Activated T-helper 2 cell treated with anti-CD3 and anti-CD28 coated beads, Interferon-gamma antibody, Interleukin-2, Interleukin-4, amounts not matched to agents 10 μg/mL and 5 μg/mL and 100 μg/mL, durations not matched to agents 14 hours and 24 hours and 36 hours (primary cell): ENCODE measurements at regions of chr6 and their contacts with region 1.

Region 1: GRCh38 chr6:90044833-90045381 is 150.6 kb downstream of the GJA10 start:
- DNase-seq: no peak
- H3K4me3 Mint-ChIP-seq: no peak overlapping the region
- H3K27ac Mint-ChIP-seq: no peak overlapping the region
- H3K4me1 Mint-ChIP-seq: peaks cover 34% of the 10 kb centered on the region
- H3K27me3 Mint-ChIP-seq: no peaks in the 10 kb centered on the region

Region 2: DNA sequence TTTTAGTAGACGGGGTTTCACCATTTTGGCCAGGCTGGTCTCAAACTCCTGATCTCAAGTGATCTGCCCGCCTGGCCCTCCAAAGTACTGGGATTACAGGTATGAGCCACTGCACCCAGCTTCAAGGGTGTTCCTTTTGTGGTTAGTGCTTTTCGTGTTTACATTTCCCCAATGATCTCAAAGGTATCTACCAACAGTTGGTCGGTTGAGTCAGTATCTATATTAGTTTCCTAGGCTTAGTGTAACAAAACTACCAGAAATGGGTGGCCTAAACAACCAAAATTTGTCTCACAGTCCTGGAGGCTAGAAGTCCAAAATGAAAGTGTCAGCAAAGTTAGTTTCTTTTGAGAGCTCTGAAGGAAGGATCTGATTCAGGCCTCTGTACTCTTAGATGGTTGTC is 185.2 kb before region 1 on chr6:
- intact Hi-C with region 1: no loop called
- DNase-seq: peak; percentile 16
- H3K4me3 Mint-ChIP-seq: no peak overlapping the region
- H3K27ac Mint-ChIP-seq: peak overlapping the region; percentile 35
- H3K4me1 Mint-ChIP-seq: peaks cover 31% of the 10 kb centered on the region
- H3K27me3 Mint-ChIP-seq: no peaks in the 10 kb centered on the region

Region 3: DNA sequence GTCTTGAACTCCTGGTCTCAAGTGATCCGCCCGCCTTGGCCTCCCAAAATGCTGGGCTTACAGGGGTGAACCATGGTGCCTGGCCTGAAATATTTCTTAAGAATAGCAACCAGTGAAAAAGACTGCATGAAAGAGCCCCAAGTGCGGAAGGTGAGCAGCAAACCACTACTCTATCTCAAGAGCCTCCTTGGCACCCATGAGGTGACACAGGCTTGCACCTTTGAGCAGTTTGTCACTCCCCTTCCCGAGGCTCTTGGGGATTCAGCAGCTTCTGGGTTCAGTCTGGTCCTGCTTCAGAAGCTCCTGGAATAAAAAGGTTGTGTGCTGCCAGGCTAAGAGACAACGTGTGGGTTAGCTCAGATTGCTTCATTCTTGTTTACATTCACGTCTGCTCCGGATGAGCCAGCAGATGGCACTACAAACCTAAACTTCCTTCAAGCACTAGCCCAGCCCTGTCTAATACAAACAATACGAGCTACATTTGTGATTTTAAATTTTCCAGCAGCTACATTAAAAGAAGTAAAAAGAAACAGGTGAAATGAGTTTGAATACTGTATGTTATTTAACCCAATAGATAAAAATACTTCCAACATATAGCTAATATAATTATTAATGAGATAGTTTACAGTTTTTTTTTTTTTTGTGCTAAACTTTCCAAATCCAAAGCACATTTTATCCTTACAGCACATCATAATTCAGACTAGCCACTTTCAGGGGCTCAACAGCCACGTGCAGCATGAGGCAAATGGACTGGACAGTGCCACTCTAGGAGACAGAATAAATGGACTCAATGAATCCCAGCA is 104.5 kb before region 1 on chr6:
- intact Hi-C with region 1: no loop called
- DNase-seq: peak; percentile 59
- H3K4me3 Mint-ChIP-seq: no peak overlapping the region
- H3K27ac Mint-ChIP-seq: no peak overlapping the region
- H3K4me1 Mint-ChIP-seq: peaks cover 38% of the 10 kb centered on the region
- H3K27me3 Mint-ChIP-seq: no peaks in the 10 kb centered on the region

Region 4: DNA sequence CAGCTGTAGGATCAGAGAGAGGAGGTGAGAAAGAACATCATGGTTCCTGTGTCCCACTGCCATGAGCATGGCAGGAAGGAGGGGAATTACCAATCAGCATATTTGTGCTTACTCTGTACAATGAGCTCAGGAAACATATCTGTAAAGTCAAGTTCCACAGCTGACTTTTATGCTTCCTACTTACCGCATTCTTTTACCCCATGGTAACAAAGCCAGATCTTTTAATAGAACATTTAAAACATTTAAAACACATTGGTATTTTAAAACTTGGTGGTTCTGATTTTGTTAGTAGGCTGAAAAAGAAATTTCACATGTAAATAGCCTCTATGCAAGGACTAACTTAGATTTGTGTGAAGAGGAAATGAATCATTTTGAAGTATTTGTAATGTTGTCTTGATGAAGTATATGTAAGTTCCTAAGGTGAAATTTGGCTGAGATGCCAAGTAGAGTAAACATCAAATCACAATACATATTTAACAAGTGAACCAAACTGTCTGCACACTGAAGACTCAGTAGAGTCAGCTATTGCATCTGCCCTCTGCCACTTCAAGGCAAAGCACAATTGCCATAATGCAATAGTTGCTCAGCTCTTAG is 35.9 kb before region 1 on chr6:
- intact Hi-C with region 1: loop called (anchors 2 kb)
- DNase-seq: no peak
- H3K4me3 Mint-ChIP-seq: no peak overlapping the region
- H3K27ac Mint-ChIP-seq: peak overlapping the region; percentile 62
- H3K4me1 Mint-ChIP-seq: peaks cover 30% of the 10 kb centered on the region
- H3K27me3 Mint-ChIP-seq: no peaks in the 10 kb centered on the region

Region 5: GRCh38 chr6:90025523-90026061 is 19.3 kb before region 1 on chr6:
- intact Hi-C with region 1: loop called (anchors 1 kb)
- DNase-seq: no peak
- H3K4me3 Mint-ChIP-seq: peak overlapping the region; percentile 72
- H3K27ac Mint-ChIP-seq: peak overlapping the region; percentile 92
- H3K4me1 Mint-ChIP-seq: peaks cover 71% of the 10 kb centered on the region
- H3K27me3 Mint-ChIP-seq: no peaks in the 10 kb centered on the region

Region 6: DNA sequence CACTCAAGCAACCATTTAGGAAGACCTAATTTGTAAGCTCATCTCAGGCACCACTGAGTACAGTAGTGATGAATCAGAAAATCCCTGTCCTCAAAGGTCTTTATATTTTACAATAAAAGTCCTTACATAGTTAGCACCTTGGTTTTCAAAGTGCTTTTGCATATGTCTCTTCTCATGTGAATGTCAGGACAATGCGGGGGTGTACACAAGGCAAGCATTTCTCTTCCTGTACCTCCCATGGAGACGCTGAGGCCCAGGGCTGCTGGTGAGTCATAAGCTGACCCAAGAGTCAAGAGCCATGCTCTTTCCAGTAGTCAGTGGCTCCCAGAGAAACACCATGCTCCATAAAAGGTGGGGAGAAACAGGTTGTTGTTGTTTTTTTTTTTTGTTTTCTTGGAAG is 23.4 kb after region 1 on chr6:
- intact Hi-C with region 1: loop called (anchors 2 kb)
- DNase-seq: no peak
- H3K4me3 Mint-ChIP-seq: peak overlapping the region; percentile 5
- H3K27ac Mint-ChIP-seq: peak overlapping the region; percentile 46
- H3K4me1 Mint-ChIP-seq: peaks cover 74% of the 10 kb centered on the region
- H3K27me3 Mint-ChIP-seq: no peaks in the 10 kb centered on the region

Region 7: GRCh38 chr6:90110971-90111370 is 66.1 kb after region 1 on chr6:
- intact Hi-C with region 1: loop called (anchors 2 kb)
- DNase-seq: peak; percentile 76
- H3K4me3 Mint-ChIP-seq: peak overlapping the region; percentile 0
- H3K27ac Mint-ChIP-seq: peak overlapping the region; percentile 68
- H3K4me1 Mint-ChIP-seq: peaks cover 69% of the 10 kb centered on the region
- H3K27me3 Mint-ChIP-seq: no peaks in the 10 kb centered on the region